CD4-positive, alpha-beta T cell (primary cell): ENCODE measurements at regions of chr16 and their contacts with region 1.

Region 1: GRCh38 chr16:67142342-67142741 is 8.5 kb downstream of the B3GNT9 start:
- DNase-seq: no peak
- ATAC-seq: no peak
- H3K4me3 ChIP-seq: no peak overlapping the region
- H3K4me3 Mint-ChIP-seq: no peak overlapping the region
- H3K27ac ChIP-seq: no peak overlapping the region
- H3K27ac Mint-ChIP-seq: no peak overlapping the region
- H3K4me1 ChIP-seq: no peaks in the 10 kb centered on the region
- H3K4me1 Mint-ChIP-seq: no peaks in the 10 kb centered on the region
- H3K27me3 ChIP-seq: no peaks in the 10 kb centered on the region
- H3K27me3 Mint-ChIP-seq: no peaks in the 10 kb centered on the region
- CTCF ChIP-seq: no peak

Region 2: GRCh38 chr16:67173808-67174705 is 31.7 kb after region 1 on chr16:
- CTCF ChIA-PET with region 1: no interaction called
- POLR2A ChIA-PET with region 1: no interaction called
- intact Hi-C with region 1: loop called in 1 of 2 experiments (anchors 2 kb)
- DNase-seq: peak; percentile 38 to 88 (median 58)
- ATAC-seq: peak; percentile 73
- H3K4me3 ChIP-seq: peak overlapping the region; percentile 53
- H3K4me3 Mint-ChIP-seq: peak overlapping the region; percentile 82
- H3K27ac ChIP-seq: no peak overlapping the region
- H3K27ac Mint-ChIP-seq: no peak overlapping the region
- H3K4me1 ChIP-seq: peaks cover 61% of the 10 kb centered on the region
- H3K4me1 Mint-ChIP-seq: peaks cover 50% of the 10 kb centered on the region
- H3K27me3 ChIP-seq: peaks cover 33 to 43% of the 10 kb centered on the region in 2 experiments
- H3K27me3 Mint-ChIP-seq: peaks cover 80% of the 10 kb centered on the region
- CTCF ChIP-seq: no peak